ENCODE measurements at regions of chr14 and their contacts with region 1.

Region 1: GRCh38 chr14:94689218-94689984 is 77.2 kb downstream of the SERPINA3 start:
- DNase-seq: peak; percentile 59
- H3K4me3 Mint-ChIP-seq: no peak overlapping the region
- H3K27ac Mint-ChIP-seq: no peak overlapping the region
- H3K4me1 Mint-ChIP-seq: peaks cover 3% of the 10 kb centered on the region
- H3K27me3 Mint-ChIP-seq: peaks cover 13% of the 10 kb centered on the region

Region 2: GRCh38 chr14:94558842-94559241 is 130.6 kb before region 1 on chr14:
- CTCF ChIA-PET with region 1: no interaction called
- intact Hi-C with region 1: no loop called
- DNase-seq: no peak
- H3K4me3 Mint-ChIP-seq: no peak overlapping the region
- H3K27ac Mint-ChIP-seq: no peak overlapping the region
- H3K4me1 Mint-ChIP-seq: no peaks in the 10 kb centered on the region
- H3K27me3 Mint-ChIP-seq: peaks cover 25% of the 10 kb centered on the region

Region 3: GRCh38 chr14:94646481-94646880 is 42.9 kb before region 1 on chr14:
- CTCF ChIA-PET with region 1: no interaction called
- intact Hi-C with region 1: no loop called
- DNase-seq: no peak
- H3K4me3 Mint-ChIP-seq: no peak overlapping the region
- H3K27ac Mint-ChIP-seq: no peak overlapping the region
- H3K4me1 Mint-ChIP-seq: no peaks in the 10 kb centered on the region
- H3K27me3 Mint-ChIP-seq: no peaks in the 10 kb centered on the region

Region 4: DNA sequence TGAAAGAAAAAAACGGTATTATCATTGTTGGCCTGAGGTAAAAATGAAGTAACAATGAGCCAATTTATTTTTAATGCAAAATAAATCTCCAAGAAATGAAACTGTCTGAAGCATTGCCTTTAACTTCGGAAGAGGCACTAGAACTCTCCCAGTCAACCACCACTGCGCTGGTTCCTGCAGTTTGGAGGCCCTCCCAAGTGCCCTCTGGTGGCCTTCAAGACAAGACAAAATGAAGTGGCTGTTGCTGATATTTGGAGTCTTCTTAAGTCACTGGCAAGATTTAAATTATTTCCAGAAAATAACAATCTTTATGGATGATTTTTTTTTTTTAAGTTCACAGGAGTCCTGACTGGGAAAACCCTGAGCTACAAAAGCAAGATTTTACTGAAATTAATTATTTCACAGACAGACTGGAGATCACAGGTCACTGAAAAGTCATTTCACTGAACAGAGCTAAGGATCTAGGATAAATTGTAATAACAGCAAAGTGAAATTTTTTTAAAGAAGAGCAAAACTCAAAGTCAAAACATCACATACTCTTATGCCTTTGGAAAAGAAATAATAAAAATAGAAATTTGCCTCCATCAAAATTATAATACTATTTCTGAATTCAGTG is 409.7 kb after region 1 on chr14:
- CTCF ChIA-PET with region 1: no interaction called
- intact Hi-C with region 1: loop called (anchors 1 kb)
- DNase-seq: peak; percentile 63
- H3K4me3 Mint-ChIP-seq: no peak overlapping the region
- H3K27ac Mint-ChIP-seq: peak overlapping the region; percentile 5
- H3K4me1 Mint-ChIP-seq: peaks cover 19% of the 10 kb centered on the region
- H3K27me3 Mint-ChIP-seq: no peaks in the 10 kb centered on the region

Region 5: DNA sequence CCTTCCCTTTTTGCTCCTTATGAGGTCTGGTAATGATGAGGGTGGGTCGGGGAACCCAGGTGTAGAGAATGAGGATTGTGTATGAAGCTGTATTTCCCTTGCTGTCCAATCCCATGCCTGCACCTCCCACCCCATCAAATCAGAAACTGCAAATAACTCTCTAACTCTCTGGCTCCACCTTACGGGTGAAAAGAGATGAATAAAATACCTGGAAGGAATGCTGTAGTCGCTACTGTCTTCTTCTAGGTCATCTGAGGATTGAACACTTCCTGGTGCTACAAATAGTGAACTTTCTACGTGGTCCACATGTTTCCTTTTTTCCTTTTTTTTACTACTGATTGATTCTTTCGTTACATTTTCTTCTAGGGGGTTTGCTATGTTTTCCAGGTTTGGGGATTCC is 506.9 kb after region 1 on chr14:
- CTCF ChIA-PET with region 1: interaction called, 5 read pairs
- intact Hi-C with region 1: loop called (anchors 1 kb)
- DNase-seq: no peak
- H3K4me3 Mint-ChIP-seq: no peak overlapping the region
- H3K27ac Mint-ChIP-seq: no peak overlapping the region
- H3K4me1 Mint-ChIP-seq: no peaks in the 10 kb centered on the region
- H3K27me3 Mint-ChIP-seq: no peaks in the 10 kb centered on the region

Region 6: GRCh38 chr14:95361373-95362137 is 672.2 kb after region 1 on chr14:
- CTCF ChIA-PET with region 1: no interaction called
- intact Hi-C with region 1: loop called (anchors 1 kb)
- DNase-seq: peak; percentile 59
- H3K4me3 Mint-ChIP-seq: no peak overlapping the region
- H3K27ac Mint-ChIP-seq: no peak overlapping the region
- H3K4me1 Mint-ChIP-seq: no peaks in the 10 kb centered on the region
- H3K27me3 Mint-ChIP-seq: peaks cover 34% of the 10 kb centered on the region

Region 7: GRCh38 chr14:95431199-95432143 is 742.1 kb after region 1 on chr14:
- CTCF ChIA-PET with region 1: no interaction called
- intact Hi-C with region 1: loop called (anchors 10 kb)
- DNase-seq: peak; percentile 30
- H3K4me3 Mint-ChIP-seq: no peak overlapping the region
- H3K27ac Mint-ChIP-seq: no peak overlapping the region
- H3K4me1 Mint-ChIP-seq: no peaks in the 10 kb centered on the region
- H3K27me3 Mint-ChIP-seq: no peaks in the 10 kb centered on the region

Measured in activated naive CD4-positive, alpha-beta T cell treated with anti-CD3 and anti-CD28 coated beads for 36 hours (primary cell).